ENCODE measurements at regions of chr10 and their contacts with region 1.

Region 1: GRCh38 chr10:77837240-77837924 is 89.2 kb downstream of the DLG5 start:
- DNase-seq: peak; percentile 45 to 88 (median 58)
- ATAC-seq: peak; percentile 59
- H3K4me3 ChIP-seq: no peak overlapping the region
- H3K4me3 Mint-ChIP-seq: peak overlapping the region; percentile 78
- H3K27ac ChIP-seq: peak overlapping the region in 1 of 2 donors; percentile 48
- H3K27ac Mint-ChIP-seq: peak overlapping the region; percentile 90
- H3K4me1 ChIP-seq: peaks cover 53% of the 10 kb centered on the region
- H3K4me1 Mint-ChIP-seq: peaks cover 32% of the 10 kb centered on the region
- H3K27me3 ChIP-seq: no peaks in the 10 kb centered on the region
- H3K27me3 Mint-ChIP-seq: no peaks in the 10 kb centered on the region
- CTCF ChIP-seq: peak; percentile 43

Region 2: DNA sequence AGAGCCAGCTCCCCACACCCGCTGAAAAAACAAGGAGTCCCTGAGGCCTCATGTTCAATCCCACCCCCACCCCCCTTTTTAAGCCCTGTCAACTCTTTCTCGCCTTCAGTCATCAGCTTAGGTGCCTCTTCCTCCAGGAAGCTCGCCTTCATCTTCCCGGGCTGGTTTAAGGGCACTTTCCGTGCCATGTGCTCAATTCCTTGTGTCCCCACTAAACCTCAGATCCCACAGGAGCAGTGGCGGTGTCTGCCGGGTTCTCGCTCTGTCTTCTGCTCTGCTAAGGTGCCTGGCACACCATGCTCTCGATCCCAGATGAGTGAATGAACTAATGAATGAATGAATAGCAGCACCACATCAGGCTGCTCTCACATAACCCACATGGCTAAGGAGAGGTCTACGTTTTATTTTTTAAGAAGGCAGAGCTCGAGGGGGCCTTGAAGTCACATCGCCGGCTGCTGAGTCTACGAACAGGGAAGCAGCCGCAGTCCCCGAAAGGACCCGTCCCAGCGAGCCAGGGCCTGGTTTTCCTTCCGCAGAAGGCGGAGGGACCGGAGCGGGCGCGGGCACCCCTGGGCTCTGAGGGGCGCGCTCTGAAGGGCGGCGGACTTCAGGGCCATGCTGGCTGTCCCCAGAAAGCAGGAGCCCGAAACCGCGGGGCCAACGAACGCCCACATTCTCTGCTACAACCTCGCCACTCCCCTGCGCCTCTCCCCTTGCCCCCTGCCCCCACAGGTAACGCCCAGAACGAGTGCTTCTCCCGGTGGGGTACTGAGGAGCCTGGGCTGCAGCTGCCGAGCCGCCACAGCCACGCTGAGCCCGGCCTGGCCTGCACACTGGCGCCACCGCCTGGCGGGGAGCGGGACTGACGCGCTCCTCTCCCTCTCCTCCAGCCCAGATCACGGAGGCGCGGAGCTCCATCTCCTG is 126.4 kb before region 1 on chr10:
- CTCF ChIA-PET with region 1: interaction called, 25 read pairs
- POLR2A ChIA-PET with region 1: no interaction called
- intact Hi-C with region 1: loop called in 1 of 2 experiments (anchors 1 kb)
- DNase-seq: peak; percentile 41 to 82 (median 60)
- ATAC-seq: peak; percentile 99
- H3K4me3 ChIP-seq: peak overlapping the region; percentile 49
- H3K4me3 Mint-ChIP-seq: peak overlapping the region; percentile 71
- H3K27ac ChIP-seq: no peak overlapping the region
- H3K27ac Mint-ChIP-seq: no peak overlapping the region
- H3K4me1 ChIP-seq: peaks cover 15% of the 10 kb centered on the region
- H3K4me1 Mint-ChIP-seq: peaks cover 5% of the 10 kb centered on the region
- H3K27me3 ChIP-seq: peaks cover 5 to 10% of the 10 kb centered on the region in 2 experiments
- H3K27me3 Mint-ChIP-seq: peaks cover 35% of the 10 kb centered on the region
- CTCF ChIP-seq: peak; percentile 83

Region 3: DNA sequence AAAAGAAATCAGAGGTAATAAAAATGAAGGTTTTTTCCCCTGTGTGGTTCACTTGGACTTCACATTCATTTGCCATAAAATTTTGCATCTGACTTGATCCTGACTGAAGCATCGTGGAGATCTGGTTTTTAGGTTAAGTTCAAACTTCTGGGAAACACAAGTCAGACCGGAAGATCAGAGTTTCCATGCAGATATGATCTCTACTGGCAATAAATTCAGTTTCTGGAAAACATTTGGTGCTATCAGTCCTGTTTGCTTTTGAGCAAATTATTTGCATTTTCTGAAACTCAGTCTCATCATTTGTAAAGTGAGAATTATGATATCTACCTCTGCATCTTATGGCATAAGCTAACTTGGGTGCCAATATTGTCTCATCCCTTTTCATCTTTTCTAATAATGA is 118.4 kb before region 1 on chr10:
- CTCF ChIA-PET with region 1: interaction called, 17 read pairs
- POLR2A ChIA-PET with region 1: no interaction called
- intact Hi-C with region 1: loop called (anchors 1 kb)
- DNase-seq: no peak
- ATAC-seq: no peak
- H3K4me3 ChIP-seq: no peak overlapping the region
- H3K4me3 Mint-ChIP-seq: no peak overlapping the region
- H3K27ac ChIP-seq: no peak overlapping the region
- H3K27ac Mint-ChIP-seq: no peak overlapping the region
- H3K4me1 ChIP-seq: no peaks in the 10 kb centered on the region
- H3K4me1 Mint-ChIP-seq: no peaks in the 10 kb centered on the region
- H3K27me3 ChIP-seq: no peaks in the 10 kb centered on the region
- H3K27me3 Mint-ChIP-seq: peaks cover 8% of the 10 kb centered on the region
- CTCF ChIP-seq: no peak

Region 4: DNA sequence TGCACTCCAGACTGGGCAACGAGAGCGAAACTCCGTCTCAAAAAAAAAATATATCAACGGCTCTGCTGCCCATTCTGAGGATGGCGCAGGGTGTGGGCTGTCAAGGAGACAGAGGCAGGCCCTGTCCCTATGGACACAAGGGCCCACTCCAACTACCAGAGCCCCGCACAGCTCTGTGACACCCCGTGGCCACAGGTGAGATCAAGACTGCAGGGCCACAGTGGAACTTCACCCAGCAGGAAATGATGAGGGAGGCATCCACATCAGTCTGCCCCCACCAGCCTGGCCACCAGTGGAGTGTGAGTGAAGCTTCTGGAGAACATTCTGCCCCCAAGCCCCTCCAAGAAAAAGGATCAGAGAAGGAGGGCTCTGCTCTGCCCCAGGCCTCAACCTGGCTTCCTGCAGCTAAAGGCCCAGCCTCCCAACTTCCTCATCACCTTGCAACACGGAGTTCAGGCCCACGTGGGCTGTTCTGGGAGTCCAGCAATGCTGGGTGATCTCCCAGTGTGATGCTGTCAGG is 47.5 kb before region 1 on chr10:
- CTCF ChIA-PET with region 1: no interaction called
- POLR2A ChIA-PET with region 1: no interaction called
- intact Hi-C with region 1: no loop called
- DNase-seq: no peak
- ATAC-seq: no peak
- H3K4me3 ChIP-seq: no peak overlapping the region
- H3K4me3 Mint-ChIP-seq: no peak overlapping the region
- H3K27ac ChIP-seq: no peak overlapping the region
- H3K27ac Mint-ChIP-seq: no peak overlapping the region
- H3K4me1 ChIP-seq: no peaks in the 10 kb centered on the region
- H3K4me1 Mint-ChIP-seq: no peaks in the 10 kb centered on the region
- H3K27me3 ChIP-seq: no peaks in the 10 kb centered on the region
- H3K27me3 Mint-ChIP-seq: no peaks in the 10 kb centered on the region
- CTCF ChIP-seq: no peak

Region 5: GRCh38 chr10:77801474-77802161 is 35.8 kb before region 1 on chr10:
- CTCF ChIA-PET with region 1: interaction called, 3 read pairs
- POLR2A ChIA-PET with region 1: no interaction called
- intact Hi-C with region 1: loop called in 1 of 2 experiments (anchors 2 kb)
- DNase-seq: peak in 9 of 14 experiments; percentile 8 to 82 (median 36)
- ATAC-seq: peak; percentile 76
- H3K4me3 ChIP-seq: no peak overlapping the region
- H3K4me3 Mint-ChIP-seq: no peak overlapping the region
- H3K27ac ChIP-seq: peak overlapping the region in 1 of 2 donors; percentile 54
- H3K27ac Mint-ChIP-seq: peak overlapping the region; percentile 72
- H3K4me1 ChIP-seq: peaks cover 29% of the 10 kb centered on the region
- H3K4me1 Mint-ChIP-seq: peaks cover 20% of the 10 kb centered on the region
- H3K27me3 ChIP-seq: no peaks in the 10 kb centered on the region
- H3K27me3 Mint-ChIP-seq: no peaks in the 10 kb centered on the region
- CTCF ChIP-seq: no peak

Region 6: GRCh38 chr10:78600740-78601139 is 763.4 kb after region 1 on chr10:
- CTCF ChIA-PET with region 1: no interaction called
- POLR2A ChIA-PET with region 1: no interaction called
- intact Hi-C with region 1: no loop called
- DNase-seq: no peak
- ATAC-seq: no peak
- H3K4me3 ChIP-seq: no peak overlapping the region
- H3K4me3 Mint-ChIP-seq: no peak overlapping the region
- H3K27ac ChIP-seq: no peak overlapping the region
- H3K27ac Mint-ChIP-seq: no peak overlapping the region
- H3K4me1 ChIP-seq: no peaks in the 10 kb centered on the region
- H3K4me1 Mint-ChIP-seq: no peaks in the 10 kb centered on the region
- H3K27me3 ChIP-seq: peaks cover 0 to 4% of the 10 kb centered on the region in 2 experiments
- H3K27me3 Mint-ChIP-seq: peaks cover 14% of the 10 kb centered on the region
- CTCF ChIP-seq: no peak

Measured in CD4-positive, alpha-beta T cell (primary cell).